ENCODE measurements at regions of chr20 and their contacts with region 1.

Region 1: GRCh38 chr20:63641792-63642544 is 11.3 kb downstream of the STMN3 start:
- DNase-seq: peak; percentile 97
- H3K4me3 ChIP-seq: peak overlapping the region; percentile 74
- H3K27ac ChIP-seq: peak overlapping the region; percentile 72
- H3K4me1 ChIP-seq: peaks cover 30% of the 10 kb centered on the region
- CTCF ChIP-seq: peak; percentile 58

Region 2: DNA sequence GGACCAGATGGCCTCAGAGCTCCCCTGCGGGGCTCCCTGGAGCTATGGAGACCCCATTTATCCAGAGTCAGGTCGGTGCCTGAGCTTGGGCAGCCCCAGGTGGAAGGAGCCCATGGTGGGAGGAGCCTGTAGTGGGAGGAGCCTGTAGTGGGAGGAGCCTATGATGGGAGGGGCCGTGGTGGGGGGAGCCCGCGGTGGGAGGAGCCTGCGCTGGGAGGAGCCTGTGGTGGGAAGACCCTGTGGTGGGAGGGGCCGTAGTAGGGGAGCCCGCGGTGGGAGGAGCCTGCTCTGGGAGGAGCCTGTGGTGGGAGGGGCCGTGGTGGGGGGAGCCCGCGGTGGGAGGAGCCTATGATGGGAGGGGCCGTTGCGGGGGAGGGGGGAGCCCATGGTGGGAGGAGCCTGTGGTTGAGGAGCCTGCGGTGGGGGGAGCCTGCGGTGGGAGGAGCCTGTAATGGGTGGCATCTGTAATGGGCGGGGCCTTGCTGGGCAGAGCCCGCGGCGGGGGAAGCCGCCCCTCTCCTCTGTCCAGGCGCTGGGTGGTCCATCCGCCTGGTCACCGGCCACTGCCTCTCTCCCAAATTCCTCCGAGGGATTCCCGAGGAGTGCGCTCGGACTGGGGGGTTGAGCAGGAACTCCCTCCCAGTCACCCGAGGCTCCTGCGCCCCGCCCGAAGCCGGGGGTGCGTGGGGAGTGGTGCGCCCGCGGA is 88.6 kb before region 1 on chr20:
- CTCF ChIA-PET with region 1: interaction called, 4 read pairs
- POLR2A ChIA-PET with region 1: interaction called, 3 read pairs
- intact Hi-C with region 1: loop called (anchors 1 kb)
- DNase-seq: peak; percentile 93
- H3K4me3 ChIP-seq: peak overlapping the region; percentile 71
- H3K27ac ChIP-seq: peak overlapping the region; percentile 91
- H3K4me1 ChIP-seq: peaks cover 43% of the 10 kb centered on the region
- CTCF ChIP-seq: no peak

Region 3: DNA sequence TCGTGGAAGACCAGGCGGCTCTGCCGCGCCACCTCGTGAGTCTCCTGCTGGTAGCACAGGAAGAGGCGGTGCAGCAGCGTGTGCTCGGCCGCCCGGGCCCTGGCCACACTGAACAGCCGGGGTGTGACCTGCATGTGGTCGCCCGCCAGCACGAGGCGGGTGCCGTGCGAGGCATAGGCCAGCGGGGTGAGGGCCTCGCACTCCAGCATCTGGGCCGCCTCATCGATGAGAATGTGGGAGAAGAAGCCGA is 74.9 kb before region 1 on chr20:
- CTCF ChIA-PET with region 1: no interaction called
- POLR2A ChIA-PET with region 1: no interaction called
- intact Hi-C with region 1: no loop called
- DNase-seq: peak; percentile 61
- H3K4me3 ChIP-seq: no peak overlapping the region
- H3K27ac ChIP-seq: no peak overlapping the region
- H3K4me1 ChIP-seq: peaks cover 12% of the 10 kb centered on the region
- CTCF ChIP-seq: peak; percentile 10; the same call in 1 of the 2 replicates

Region 4: DNA sequence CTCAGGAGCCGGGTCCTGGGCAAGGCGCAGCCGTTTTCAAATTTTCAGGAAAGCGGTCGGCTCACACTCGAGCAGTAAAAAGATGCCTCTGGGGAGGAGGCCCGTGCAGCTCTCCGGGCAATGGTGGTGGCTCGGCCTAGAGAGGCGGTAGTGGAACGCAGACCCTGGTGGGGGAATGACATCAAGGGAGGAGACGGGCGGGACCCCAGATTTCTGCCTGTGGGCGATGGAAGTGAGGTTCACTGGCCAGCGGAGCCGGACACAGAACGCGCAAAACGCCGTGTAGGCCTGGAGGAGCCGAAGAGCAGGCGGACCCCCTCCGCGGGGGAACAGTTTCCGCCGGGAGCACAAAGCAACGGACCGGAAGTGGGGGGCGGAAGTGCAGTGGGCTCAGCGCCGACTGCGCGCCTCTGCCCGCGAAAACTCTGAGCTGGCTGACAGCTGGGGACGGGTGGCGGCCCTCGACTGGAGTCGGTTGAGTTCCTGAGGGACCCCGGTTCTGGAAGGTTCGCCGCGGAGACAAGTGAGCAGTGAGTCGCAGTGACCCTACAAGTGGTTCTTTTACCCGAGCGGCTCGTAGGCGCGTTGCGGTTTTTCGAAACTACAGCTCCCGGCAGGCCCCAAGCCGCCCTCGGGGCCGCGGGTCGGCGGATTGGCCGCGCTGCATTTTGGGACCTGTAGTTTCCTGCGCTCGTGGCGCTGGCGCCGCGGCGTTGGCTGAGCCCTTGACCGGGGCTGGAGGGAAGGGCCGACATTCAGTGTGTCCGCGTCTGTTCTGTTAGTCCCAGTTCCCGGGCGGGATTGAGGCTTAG is 16.2 kb after region 1 on chr20 and contains the start of gene RTEL1:
- CTCF ChIA-PET with region 1: interaction called, 10 read pairs
- POLR2A ChIA-PET with region 1: interaction called, 3 read pairs
- intact Hi-C with region 1: no loop called
- DNase-seq: peak; percentile 90
- H3K4me3 ChIP-seq: peak within 1 kb of the TSS; percentile 94
- H3K27ac ChIP-seq: peak within 1 kb of the TSS; percentile 57
- H3K4me1 ChIP-seq: peaks cover 12% of the 10 kb centered on the region
- CTCF ChIP-seq: no peak
- total RNA-seq, gene RTEL1: 20.0 and 22.5 TPM in 2 replicates

Region 5: DNA sequence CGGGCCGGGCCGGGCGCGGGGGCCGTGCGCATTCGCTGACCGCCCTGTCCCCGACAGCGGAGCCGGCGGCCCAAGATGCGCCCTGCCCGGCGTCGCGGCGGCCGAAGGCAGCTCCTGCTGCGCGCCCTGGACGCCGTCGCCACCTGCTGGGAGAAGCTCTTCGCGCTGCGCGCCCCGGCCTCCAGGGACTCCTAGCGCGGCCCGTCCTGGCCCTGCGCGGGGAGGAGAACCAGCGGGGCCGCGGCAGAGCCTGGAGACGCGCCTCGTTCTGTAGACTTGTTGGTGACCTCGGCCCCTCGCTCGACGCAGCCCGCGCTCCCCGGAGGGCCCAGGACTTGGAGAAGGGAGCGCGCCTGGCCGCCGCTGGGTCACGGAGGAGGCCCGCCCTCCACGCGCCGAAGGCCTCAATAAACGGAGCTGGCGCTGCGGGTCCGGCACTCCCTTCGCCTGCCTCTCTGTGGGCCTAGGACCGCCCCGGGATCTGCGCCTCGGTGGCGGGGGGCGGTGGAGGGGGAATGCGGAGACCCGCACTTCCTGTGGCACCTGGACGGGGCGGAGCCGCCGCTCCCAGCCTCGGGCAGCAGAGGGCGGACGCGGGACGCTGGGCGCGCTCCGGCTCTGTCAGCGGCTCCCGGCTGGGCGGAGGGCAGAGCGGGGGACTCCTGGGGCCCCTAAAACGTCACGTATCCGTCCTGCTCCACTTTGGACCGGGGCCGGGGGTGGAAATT is 396.8 kb after region 1 on chr20:
- CTCF ChIA-PET with region 1: no interaction called
- POLR2A ChIA-PET with region 1: no interaction called
- intact Hi-C with region 1: no loop called
- DNase-seq: peak; percentile 80
- H3K4me3 ChIP-seq: peak overlapping the region; percentile 63
- H3K27ac ChIP-seq: no peak overlapping the region
- H3K4me1 ChIP-seq: peaks cover 45% of the 10 kb centered on the region
- CTCF ChIP-seq: peak; percentile 73